ENCODE measurements at regions of chr17 and their contacts with region 1.

Region 1: GRCh38 chr17:43546319-43547188 is at the start of gene ETV4:
- DNase-seq: peak; percentile 96
- ATAC-seq: peak; percentile 94
- H3K4me3 Mint-ChIP-seq: peak within 1 kb of the TSS; percentile 75
- H3K27ac Mint-ChIP-seq: peak within 1 kb of the TSS; percentile 16
- H3K4me1 Mint-ChIP-seq: peaks cover 17% of the 10 kb centered on the region
- H3K27me3 Mint-ChIP-seq: peaks cover 49% of the 10 kb centered on the region
- total RNA-seq, gene ETV4: 2.9 to 3.3 TPM

Region 2: GRCh38 chr17:43562679-43563599 is 16.4 kb after region 1 on chr17:
- CTCF ChIA-PET with region 1: no interaction called
- POLR2A ChIA-PET with region 1: no interaction called
- intact Hi-C with region 1: no loop called
- DNase-seq: no peak
- ATAC-seq: no peak
- H3K4me3 Mint-ChIP-seq: no peak overlapping the region
- H3K27ac Mint-ChIP-seq: no peak overlapping the region
- H3K4me1 Mint-ChIP-seq: no peaks in the 10 kb centered on the region
- H3K27me3 Mint-ChIP-seq: peaks cover 25% of the 10 kb centered on the region

Region 3: GRCh38 chr17:43591779-43592562 is 45.4 kb after region 1 on chr17:
- CTCF ChIA-PET with region 1: no interaction called
- POLR2A ChIA-PET with region 1: no interaction called
- intact Hi-C with region 1: no loop called
- DNase-seq: no peak
- ATAC-seq: no peak
- H3K4me3 Mint-ChIP-seq: no peak overlapping the region
- H3K27ac Mint-ChIP-seq: no peak overlapping the region
- H3K4me1 Mint-ChIP-seq: no peaks in the 10 kb centered on the region
- H3K27me3 Mint-ChIP-seq: peaks cover 2% of the 10 kb centered on the region

Region 4: GRCh38 chr17:43661699-43662412 is 115.3 kb after region 1 on chr17 and contains the start of gene MEOX1:
- CTCF ChIA-PET with region 1: no interaction called
- POLR2A ChIA-PET with region 1: no interaction called
- intact Hi-C with region 1: loop called in 1 of 2 experiments (anchors 1 kb)
- DNase-seq: peak; percentile 63
- ATAC-seq: peak; percentile 89
- H3K4me3 Mint-ChIP-seq: peak within 1 kb of the TSS; percentile 14
- H3K27ac Mint-ChIP-seq: peak within 1 kb of the TSS; percentile 51
- H3K4me1 Mint-ChIP-seq: peaks cover 30% of the 10 kb centered on the region
- H3K27me3 Mint-ChIP-seq: peaks cover 6% of the 10 kb centered on the region
- total RNA-seq, gene MEOX1: 0.34 to 0.65 TPM